Heart left ventricle (tissue), 16 donors: ENCODE measurements at regions of chr12 and their contacts with region 1.

Region 1: DNA sequence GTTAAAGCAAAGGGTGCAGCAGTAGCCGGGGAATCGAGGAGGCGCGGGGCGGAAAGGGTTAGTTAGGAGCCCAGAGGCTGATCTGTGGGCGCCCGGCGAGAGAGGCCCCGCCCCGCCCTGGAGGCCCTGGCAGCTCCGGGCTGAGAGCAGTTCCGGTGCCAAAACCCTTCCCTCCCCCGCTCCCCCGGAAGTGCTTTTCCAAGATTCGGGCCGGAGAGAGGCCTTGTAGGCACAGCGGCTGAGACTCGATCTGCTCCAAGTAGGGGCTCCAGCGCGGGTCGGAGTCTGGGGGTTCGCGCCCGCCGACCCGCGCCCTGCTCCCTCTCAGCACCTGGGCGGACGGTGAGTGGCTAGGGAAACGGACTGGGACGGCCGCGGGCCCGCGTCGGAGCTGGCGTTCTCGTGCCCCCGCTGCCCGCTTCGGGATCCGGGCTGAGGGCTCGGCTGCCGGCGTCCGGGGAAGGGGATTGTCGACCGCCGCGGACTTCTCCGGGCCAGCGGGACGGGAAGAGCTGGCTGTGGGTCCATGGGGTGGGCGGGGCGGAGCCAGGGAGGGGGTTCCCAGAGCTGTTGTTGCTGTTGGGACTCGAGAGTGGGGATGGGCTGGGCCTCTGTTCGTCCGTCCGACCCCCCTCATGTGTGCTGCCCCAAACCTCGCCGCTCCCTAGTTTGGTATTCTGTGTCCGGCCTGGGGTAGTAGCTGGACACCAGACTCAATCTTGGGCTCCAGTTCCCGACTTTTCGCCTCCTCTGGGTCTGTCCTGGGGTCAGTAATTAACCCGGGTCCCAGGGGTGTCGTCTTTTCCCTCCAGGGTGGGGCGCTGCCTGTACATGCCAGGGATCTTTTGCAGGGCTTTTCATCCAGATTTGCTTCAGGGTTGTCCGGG is at the start of gene FRS2:
- DNase-seq: peak; percentile 92 to 95 (median 93)
- ATAC-seq: peak; percentile 98 to 100 (median 99)
- H3K4me3 ChIP-seq: peak within 1 kb of the TSS; percentile 70 to 99 (median 94)
- H3K27ac ChIP-seq: peak within 1 kb of the TSS; percentile 43 to 98 (median 92)
- H3K4me1 ChIP-seq: peaks cover 0 to 65% (median 44%) of the 10 kb centered on the region in 12 donors
- H3K27me3 ChIP-seq: no peaks in the 10 kb centered on the region
- CTCF ChIP-seq: peak in 8 of 12 donors; percentile 15 to 45 (median 26)
- POLR2A ChIP-seq: peak in 1 of 2 donors; percentile 82
- total RNA-seq, gene FRS2: 14.8 to 33.9 (median 21.4) TPM

Region 2: GRCh38 chr12:69083689-69084088 is 386.7 kb before region 1 on chr12:
- intact Hi-C with region 1: no loop called
- DNase-seq: no peak
- ATAC-seq: no peak
- H3K4me3 ChIP-seq: no peak overlapping the region
- H3K27ac ChIP-seq: no peak overlapping the region
- H3K4me1 ChIP-seq: no peaks in the 10 kb centered on the region
- H3K27me3 ChIP-seq: no peaks in the 10 kb centered on the region
- CTCF ChIP-seq: no peak
- POLR2A ChIP-seq: no peak

Region 3: GRCh38 chr12:69225251-69225910 is 245.1 kb before region 1 on chr12:
- intact Hi-C with region 1: no loop called
- DNase-seq: no peak
- ATAC-seq: no peak
- H3K4me3 ChIP-seq: no peak overlapping the region
- H3K27ac ChIP-seq: no peak overlapping the region
- H3K4me1 ChIP-seq: no peaks in the 10 kb centered on the region
- H3K27me3 ChIP-seq: no peaks in the 10 kb centered on the region
- CTCF ChIP-seq: no peak
- POLR2A ChIP-seq: no peak

Region 4: GRCh38 chr12:69348162-69348938 is 122.1 kb before region 1 on chr12 and contains the start of gene LYZ:
- intact Hi-C with region 1: no loop called
- DNase-seq: peak in 2 of 5 donors; percentile 26 to 37
- ATAC-seq: peak; percentile 60 to 86 (median 68)
- H3K4me3 ChIP-seq: peak within 1 kb of the TSS in 6 of 12 donors; percentile 3 to 38 (median 22)
- H3K27ac ChIP-seq: peak within 1 kb of the TSS in 2 of 12 donors; percentile 18 to 84
- H3K4me1 ChIP-seq: peaks cover 0 to 16% (median 0%) of the 10 kb centered on the region in 12 donors
- H3K27me3 ChIP-seq: no peaks in the 10 kb centered on the region
- CTCF ChIP-seq: no peak
- POLR2A ChIP-seq: no peak
- total RNA-seq, gene LYZ: 2.4 to 316 (median 18.2) TPM

Region 5: DNA sequence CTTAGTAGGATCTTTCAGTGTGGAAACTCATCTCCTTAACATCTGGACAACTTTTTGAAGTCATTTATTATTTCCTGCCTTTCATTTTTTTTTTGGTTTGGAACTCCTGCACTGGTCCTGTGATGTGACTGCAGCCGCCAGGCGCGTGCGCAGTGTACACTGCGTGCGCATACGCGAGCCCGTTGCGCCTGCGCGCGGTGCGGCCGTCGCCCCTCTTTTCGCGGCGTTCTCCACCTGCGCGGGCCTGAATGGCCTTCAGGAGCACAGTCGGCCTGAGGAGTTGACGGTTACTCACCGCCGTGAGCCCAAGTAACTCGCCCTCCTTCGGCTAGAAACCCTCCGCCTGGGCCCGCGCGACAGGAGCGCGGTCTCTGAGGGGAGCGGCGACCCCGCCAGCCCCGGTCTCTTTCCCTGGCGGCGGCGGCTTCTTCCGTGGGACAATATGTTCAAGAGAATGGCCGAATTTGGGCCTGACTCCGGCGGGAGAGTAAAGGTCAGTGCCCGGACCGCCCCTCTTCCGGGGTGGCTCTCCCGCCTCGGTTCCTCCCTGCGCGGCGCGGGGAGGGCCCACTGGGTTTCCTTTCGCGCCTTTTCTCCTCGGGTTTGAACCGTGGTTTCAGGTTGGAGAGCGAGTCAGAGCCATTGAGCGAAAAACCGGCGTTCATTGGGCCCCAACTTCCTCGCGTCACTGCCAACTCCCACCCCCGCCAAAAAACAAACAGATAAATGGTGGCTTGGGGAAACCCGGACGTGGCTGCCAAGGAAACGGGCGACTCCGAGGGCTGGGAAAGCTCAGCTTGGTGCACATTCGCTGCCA is 110.7 kb before region 1 on chr12 and contains the start of gene YEATS4:
- intact Hi-C with region 1: loop called in 1 of 10 experiments (anchors 5 kb)
- DNase-seq: peak; percentile 82 to 92 (median 86)
- ATAC-seq: peak; percentile 96 to 98 (median 98)
- H3K4me3 ChIP-seq: peak within 1 kb of the TSS; percentile 52 to 93 (median 80)
- H3K27ac ChIP-seq: peak within 1 kb of the TSS; percentile 83 to 99 (median 92)
- H3K4me1 ChIP-seq: peaks cover 0 to 25% (median 9%) of the 10 kb centered on the region in 12 donors
- H3K27me3 ChIP-seq: no peaks in the 10 kb centered on the region
- CTCF ChIP-seq: no peak
- POLR2A ChIP-seq: no peak
- total RNA-seq, gene YEATS4: 6.7 to 45.0 (median 9.9) TPM

Region 6: GRCh38 chr12:69430942-69431590 is 39.4 kb before region 1 on chr12:
- intact Hi-C with region 1: loop called in 2 of 10 experiments (anchors 5 kb)
- DNase-seq: peak in 4 of 5 donors; percentile 47 to 67 (median 58)
- ATAC-seq: peak; percentile 54 to 90 (median 86)
- H3K4me3 ChIP-seq: no peak overlapping the region
- H3K27ac ChIP-seq: peak overlapping the region; percentile 25 to 85 (median 68)
- H3K4me1 ChIP-seq: peaks cover 0 to 22% (median 4%) of the 10 kb centered on the region in 12 donors
- H3K27me3 ChIP-seq: no peaks in the 10 kb centered on the region
- CTCF ChIP-seq: no peak
- POLR2A ChIP-seq: no peak

Region 7: DNA sequence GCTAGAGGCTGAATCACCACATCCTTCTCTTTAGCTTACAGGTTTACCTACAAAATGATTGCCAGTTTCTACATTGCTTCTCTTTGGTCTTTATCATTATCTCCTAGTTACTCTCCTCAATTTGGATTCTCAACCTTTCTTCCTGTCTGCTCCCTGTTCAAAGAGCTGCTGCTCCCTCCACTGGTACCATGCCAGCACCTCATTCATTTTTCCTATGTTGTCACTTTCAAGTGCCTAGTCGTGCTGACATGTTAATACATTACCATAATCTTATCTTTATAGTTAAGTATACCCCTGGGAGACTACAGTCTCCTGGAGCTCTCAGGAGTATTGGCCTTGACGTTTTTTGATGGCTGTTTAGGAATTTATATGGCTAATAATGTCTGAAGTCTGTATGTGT is 14.0 kb after region 1 on chr12:
- intact Hi-C with region 1: no loop called
- DNase-seq: no peak
- ATAC-seq: peak in 2 of 4 donors; percentile 63 to 64
- H3K4me3 ChIP-seq: no peak overlapping the region
- H3K27ac ChIP-seq: no peak overlapping the region
- H3K4me1 ChIP-seq: peaks cover 0 to 26% (median 18%) of the 10 kb centered on the region in 12 donors
- H3K27me3 ChIP-seq: no peaks in the 10 kb centered on the region
- CTCF ChIP-seq: no peak
- POLR2A ChIP-seq: no peak

Region 8: DNA sequence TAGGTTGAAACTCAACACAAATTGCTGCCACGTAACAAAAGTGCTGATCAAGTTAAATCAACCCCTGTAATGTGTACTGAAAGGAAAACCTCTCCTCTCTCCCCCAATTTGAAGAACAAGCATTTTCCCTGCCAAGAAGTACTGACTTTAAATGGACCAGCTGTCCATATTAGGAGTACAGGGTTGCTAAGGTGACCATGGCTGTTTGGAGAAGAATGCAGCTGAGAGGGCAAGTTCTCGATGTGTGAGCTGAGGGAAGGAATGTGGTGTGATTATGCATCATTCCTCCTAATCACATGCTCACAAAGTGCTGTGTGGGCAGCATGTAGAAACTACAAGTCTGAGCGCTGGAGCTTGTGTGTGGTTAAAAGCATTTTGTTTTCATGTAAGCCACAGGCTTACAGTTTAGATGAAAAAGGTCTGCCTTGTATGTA is 64.0 kb after region 1 on chr12:
- intact Hi-C with region 1: loop called in 1 of 10 experiments (anchors 10 kb)
- DNase-seq: peak in 4 of 5 donors; percentile 46 to 73 (median 54)
- ATAC-seq: peak; percentile 84 to 99 (median 98)
- H3K4me3 ChIP-seq: no peak overlapping the region
- H3K27ac ChIP-seq: peak overlapping the region in 10 of 12 donors; percentile 5 to 74 (median 42)
- H3K4me1 ChIP-seq: peaks cover 0 to 22% (median 17%) of the 10 kb centered on the region in 12 donors
- H3K27me3 ChIP-seq: no peaks in the 10 kb centered on the region
- CTCF ChIP-seq: no peak
- POLR2A ChIP-seq: no peak

Region 9: GRCh38 chr12:69585189-69586062 is 115.0 kb after region 1 on chr12 and contains the start of gene CCT2:
- intact Hi-C with region 1: loop called in 1 of 10 experiments (anchors 5 kb)
- DNase-seq: peak; percentile 97 to 98 (median 98)
- ATAC-seq: peak; percentile 99 to 100 (median 100)
- H3K4me3 ChIP-seq: peak within 1 kb of the TSS; percentile 63 to 99 (median 82)
- H3K27ac ChIP-seq: peak within 1 kb of the TSS; percentile 66 to 92 (median 90)
- H3K4me1 ChIP-seq: peaks cover 0 to 22% (median 11%) of the 10 kb centered on the region in 12 donors
- H3K27me3 ChIP-seq: no peaks in the 10 kb centered on the region
- CTCF ChIP-seq: peak in 9 of 12 donors; percentile 10 to 49 (median 23)
- POLR2A ChIP-seq: peak in 1 of 2 donors; percentile 86
- total RNA-seq, gene CCT2: 63.2 to 168 (median 93.3) TPM